HEK293T (cell line): ENCODE measurements at regions of chr4 and their contacts with region 1.

Region 1: DNA sequence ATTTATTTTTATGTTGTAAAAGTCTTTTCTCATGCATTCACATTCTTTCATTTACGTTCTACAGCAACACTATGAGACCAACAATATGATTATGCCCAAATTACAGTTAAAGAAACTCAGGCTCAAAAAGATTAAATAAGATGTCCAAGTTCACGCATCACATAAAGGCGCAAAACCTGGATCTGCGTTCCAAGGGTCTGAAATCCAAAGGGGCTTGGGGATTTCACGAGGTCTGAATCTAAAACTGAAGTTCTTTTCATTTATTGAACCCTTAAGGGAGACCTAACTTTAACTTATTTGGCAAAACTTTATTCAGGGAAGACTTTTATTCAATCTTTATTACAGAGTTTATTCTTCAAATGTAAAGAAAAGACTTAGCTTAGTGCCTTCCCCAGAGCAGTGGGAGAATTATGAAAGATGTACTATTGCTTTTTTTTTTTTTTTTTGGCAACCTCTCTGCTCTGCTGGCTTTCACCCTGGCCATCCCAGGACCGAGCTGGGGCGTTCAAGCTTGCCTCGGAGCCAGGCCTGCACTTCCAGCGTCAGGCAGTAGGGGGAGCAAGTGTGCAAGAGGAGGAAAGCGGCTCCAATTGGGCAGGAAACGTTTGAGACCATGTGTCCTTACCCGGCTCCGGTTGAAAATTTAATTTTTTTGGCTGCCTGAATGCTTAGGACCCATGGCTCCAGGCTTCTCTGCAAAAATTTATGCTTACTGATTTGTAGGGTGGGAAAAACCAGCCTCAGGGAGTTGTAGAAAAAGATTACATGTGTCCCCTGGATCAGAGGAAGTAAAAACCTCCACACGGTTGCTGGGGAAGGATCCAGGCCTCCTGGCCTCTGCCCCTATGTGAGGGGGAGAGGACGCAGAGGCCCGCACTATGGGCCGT is 344.3 kb upstream of the KLF3 start:
- DNase-seq: peak; percentile 75

Region 2: GRCh38 chr4:38675146-38676121 is 355.7 kb after region 1 on chr4:
- CTCF ChIA-PET with region 1: interaction called, 13 read pairs
- POLR2A ChIA-PET with region 1: interaction called, 5 read pairs
- DNase-seq: peak; percentile 46